ENCODE measurements at regions of chr10 and their contacts with region 1.

Region 1: DNA sequence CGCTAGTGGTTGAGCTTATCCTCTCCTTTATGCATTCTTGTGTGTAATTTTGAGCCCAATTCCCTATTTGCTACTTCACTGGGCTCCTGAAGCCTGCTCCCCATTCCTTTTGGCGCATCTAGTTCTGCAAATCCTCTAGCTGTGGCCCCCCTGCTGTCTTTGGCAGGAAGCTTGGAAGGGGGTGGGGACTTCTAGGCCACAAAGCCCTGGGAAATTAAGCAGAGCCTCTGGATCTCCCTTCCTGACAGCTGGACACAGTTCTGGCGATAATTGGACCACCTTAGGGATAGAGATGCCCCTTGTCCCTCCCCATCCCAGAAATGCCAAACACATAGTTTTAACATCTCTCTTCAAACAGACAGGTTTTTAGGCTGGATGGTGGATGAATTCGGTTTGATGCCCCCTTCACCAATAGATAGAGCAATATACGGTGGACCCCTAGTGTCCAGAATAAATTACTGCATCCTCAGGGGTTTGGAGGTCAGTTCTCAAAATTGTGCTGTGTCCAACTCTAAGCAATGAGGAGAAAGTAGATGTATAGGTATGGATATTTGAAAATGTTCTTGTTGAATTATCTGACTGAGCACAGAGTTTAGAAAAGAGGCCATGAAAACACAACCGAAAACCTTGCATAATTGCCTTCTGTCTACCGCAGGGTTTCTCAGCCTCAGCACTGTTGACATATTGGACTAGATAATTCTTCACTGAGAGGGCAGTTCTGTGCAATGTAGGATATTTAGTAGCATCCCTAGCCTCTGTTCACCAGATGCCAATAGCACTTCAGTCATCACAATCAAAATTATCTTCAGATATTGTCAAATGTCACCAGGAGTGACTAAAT is 75.5 kb downstream of the PAPSS2 start:
- DNase-seq: peak; percentile 48 to 50
- H3K4me3 ChIP-seq: no peak overlapping the region
- H3K27ac ChIP-seq: peak overlapping the region in 2 of 3 donors; percentile 9 to 56
- H3K4me1 ChIP-seq: peaks cover 6% of the 10 kb centered on the region in 2 donors
- H3K27me3 ChIP-seq: no peaks in the 10 kb centered on the region
- CTCF ChIP-seq: peak; percentile 39 to 96 (median 80)
- POLR2A ChIP-seq: no peak

Region 2: GRCh38 chr10:86706401-86706841 is 1028.8 kb before region 1 on chr10:
- intact Hi-C with region 1: no loop called
- DNase-seq: no peak
- H3K4me3 ChIP-seq: no peak overlapping the region
- H3K27ac ChIP-seq: no peak overlapping the region
- H3K4me1 ChIP-seq: peaks cover 17 to 30% of the 10 kb centered on the region in 2 donors
- H3K27me3 ChIP-seq: no peaks in the 10 kb centered on the region
- CTCF ChIP-seq: no peak
- POLR2A ChIP-seq: no peak

Region 3: DNA sequence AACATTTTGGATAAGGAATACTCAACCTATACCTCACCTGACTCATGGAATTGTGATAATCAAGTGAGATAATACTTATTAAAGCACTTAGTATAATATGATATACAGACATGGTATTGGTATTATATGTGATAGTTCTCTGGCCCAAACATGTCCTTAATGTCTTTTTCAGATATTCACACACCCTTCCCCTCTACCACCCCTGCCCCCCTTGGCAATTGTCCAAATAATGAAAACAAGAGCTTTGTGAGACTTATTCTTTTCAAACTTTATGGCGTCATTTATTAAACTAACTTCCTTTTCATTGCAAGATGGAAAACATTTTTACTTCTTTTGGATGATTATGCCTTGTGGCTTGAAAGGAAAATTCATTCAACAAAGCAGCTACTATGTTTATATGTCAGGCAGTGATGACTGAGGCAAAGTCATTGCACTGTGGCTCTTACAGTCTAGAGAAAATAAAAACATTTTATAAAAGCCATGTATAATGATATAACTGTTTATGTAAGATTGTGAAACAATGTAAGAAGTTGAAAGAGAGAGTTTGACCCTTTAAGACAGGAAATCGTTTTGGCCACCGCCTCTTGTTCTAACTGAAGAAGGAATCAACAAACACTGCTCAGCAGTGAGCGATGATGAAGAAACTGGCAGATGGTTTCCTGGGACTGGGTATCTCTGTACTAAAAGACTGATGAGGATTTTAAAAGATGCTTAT is 203.1 kb before region 1 on chr10:
- intact Hi-C with region 1: loop called (anchors 5 kb)
- DNase-seq: no peak
- H3K4me3 ChIP-seq: no peak overlapping the region
- H3K27ac ChIP-seq: peak overlapping the region in 2 of 3 donors; percentile 14 to 52
- H3K4me1 ChIP-seq: no peaks in the 10 kb centered on the region
- H3K27me3 ChIP-seq: no peaks in the 10 kb centered on the region
- CTCF ChIP-seq: no peak
- POLR2A ChIP-seq: no peak

Region 4: DNA sequence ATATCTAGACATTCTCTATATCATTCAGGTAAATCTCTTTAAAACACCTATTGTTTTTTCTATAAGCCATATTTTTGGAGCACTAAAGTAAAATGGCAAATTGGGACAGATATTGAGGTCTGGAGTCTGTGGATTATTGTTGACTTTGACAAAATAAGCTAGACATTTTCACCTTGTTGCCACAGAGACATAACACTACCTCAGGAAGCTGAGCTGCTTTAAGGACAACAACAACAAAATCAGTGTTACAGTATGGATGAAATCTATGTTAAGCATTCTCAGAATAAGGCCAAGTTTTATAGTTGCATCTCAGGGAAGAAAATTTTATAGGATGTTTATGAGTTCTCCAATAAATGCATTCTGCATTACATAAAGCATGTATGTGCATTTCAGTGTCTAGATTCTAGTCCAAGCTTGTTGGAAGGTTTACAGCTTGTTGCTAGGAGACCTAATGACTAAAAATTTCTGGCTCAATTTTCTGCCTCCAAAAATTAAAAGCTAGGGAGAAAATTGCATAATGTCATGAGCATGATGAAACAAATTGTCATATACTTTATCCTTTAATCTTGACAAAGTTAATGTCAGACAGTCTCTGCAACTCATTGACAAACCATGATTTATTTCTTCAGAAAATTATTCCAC is 1085.7 kb after region 1 on chr10:
- intact Hi-C with region 1: no loop called
- DNase-seq: no peak
- H3K4me3 ChIP-seq: no peak overlapping the region
- H3K27ac ChIP-seq: no peak overlapping the region
- H3K4me1 ChIP-seq: no peaks in the 10 kb centered on the region
- H3K27me3 ChIP-seq: no peaks in the 10 kb centered on the region
- CTCF ChIP-seq: no peak
- POLR2A ChIP-seq: no peak

Measured in thyroid gland (tissue), 4 donors.